ENCODE measurements at regions of chr5 and their contacts with region 1.

Region 1: GRCh38 chr5:66171349-66172344 is 27.5 kb downstream of the SREK1 start:
- DNase-seq: peak; percentile 71
- ATAC-seq: peak; percentile 64
- H3K4me3 ChIP-seq: no peak overlapping the region
- H3K4me3 Mint-ChIP-seq: no peak overlapping the region
- H3K27ac ChIP-seq: peak overlapping the region; percentile 18 to 60
- H3K27ac Mint-ChIP-seq: no peak overlapping the region
- H3K4me1 ChIP-seq: peaks cover 0 to 8% of the 10 kb centered on the region in 2 donors
- H3K4me1 Mint-ChIP-seq: peaks cover 20% of the 10 kb centered on the region
- H3K27me3 ChIP-seq: no peaks in the 10 kb centered on the region
- H3K27me3 Mint-ChIP-seq: no peaks in the 10 kb centered on the region
- CTCF ChIP-seq: peak; percentile 70

Region 2: DNA sequence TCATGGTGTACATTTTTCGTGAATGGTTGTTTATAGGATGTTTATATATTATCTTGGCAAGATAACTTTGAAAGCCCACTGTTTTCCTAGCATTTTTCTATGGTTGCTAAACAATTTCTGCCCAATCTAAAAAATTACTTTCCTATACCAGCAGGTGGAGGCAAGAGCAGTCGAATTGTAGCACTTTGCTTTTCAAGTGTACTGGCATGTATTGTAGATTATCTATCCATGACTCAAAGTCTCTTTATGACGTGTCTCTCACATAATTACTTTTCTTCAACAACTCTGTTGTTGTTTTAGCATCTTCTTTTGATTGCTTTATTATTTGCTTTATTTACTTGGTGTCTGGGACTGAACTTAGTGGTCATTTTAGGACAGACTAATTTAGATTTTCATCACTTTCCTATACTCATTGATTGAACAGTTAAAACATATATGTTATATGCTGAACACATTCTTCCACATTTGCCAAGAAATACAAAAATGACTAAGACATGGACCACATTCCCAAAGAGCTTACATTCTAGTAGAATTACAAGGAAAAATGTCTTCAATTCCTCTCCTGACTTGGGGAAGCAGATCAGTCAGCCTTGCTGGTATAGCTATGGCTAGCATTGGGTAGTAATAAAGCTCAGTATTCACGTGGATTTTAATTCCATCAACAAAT is 428.9 kb before region 1 on chr5:
- CTCF ChIA-PET with region 1: no interaction called
- POLR2A ChIA-PET with region 1: no interaction called
- intact Hi-C with region 1: loop called (anchors 5 kb)
- DNase-seq: peak; percentile 46
- ATAC-seq: peak; percentile 49
- H3K4me3 ChIP-seq: no peak overlapping the region
- H3K4me3 Mint-ChIP-seq: no peak overlapping the region
- H3K27ac ChIP-seq: no peak overlapping the region
- H3K27ac Mint-ChIP-seq: no peak overlapping the region
- H3K4me1 ChIP-seq: no peaks in the 10 kb centered on the region
- H3K4me1 Mint-ChIP-seq: peaks cover 2% of the 10 kb centered on the region
- H3K27me3 ChIP-seq: no peaks in the 10 kb centered on the region
- H3K27me3 Mint-ChIP-seq: no peaks in the 10 kb centered on the region
- CTCF ChIP-seq: peak; percentile 75

Region 3: GRCh38 chr5:66021585-66021984 is 150.1 kb before region 1 on chr5:
- CTCF ChIA-PET with region 1: no interaction called
- POLR2A ChIA-PET with region 1: no interaction called
- intact Hi-C with region 1: no loop called
- DNase-seq: no peak
- ATAC-seq: no peak
- H3K4me3 ChIP-seq: no peak overlapping the region
- H3K4me3 Mint-ChIP-seq: no peak overlapping the region
- H3K27ac ChIP-seq: no peak overlapping the region
- H3K27ac Mint-ChIP-seq: no peak overlapping the region
- H3K4me1 ChIP-seq: no peaks in the 10 kb centered on the region
- H3K4me1 Mint-ChIP-seq: peaks cover 5% of the 10 kb centered on the region
- H3K27me3 ChIP-seq: no peaks in the 10 kb centered on the region
- H3K27me3 Mint-ChIP-seq: no peaks in the 10 kb centered on the region
- CTCF ChIP-seq: no peak

Region 4: GRCh38 chr5:66193419-66193818 is 21.8 kb after region 1 on chr5:
- CTCF ChIA-PET with region 1: no interaction called
- POLR2A ChIA-PET with region 1: no interaction called
- intact Hi-C with region 1: no loop called
- DNase-seq: no peak
- ATAC-seq: no peak
- H3K4me3 ChIP-seq: no peak overlapping the region
- H3K4me3 Mint-ChIP-seq: no peak overlapping the region
- H3K27ac ChIP-seq: no peak overlapping the region
- H3K27ac Mint-ChIP-seq: no peak overlapping the region
- H3K4me1 ChIP-seq: no peaks in the 10 kb centered on the region
- H3K4me1 Mint-ChIP-seq: no peaks in the 10 kb centered on the region
- H3K27me3 ChIP-seq: no peaks in the 10 kb centered on the region
- H3K27me3 Mint-ChIP-seq: no peaks in the 10 kb centered on the region
- CTCF ChIP-seq: no peak